HepG2 (cell line): ENCODE measurements at regions of chr2 and their contacts with region 1.

Region 1: DNA sequence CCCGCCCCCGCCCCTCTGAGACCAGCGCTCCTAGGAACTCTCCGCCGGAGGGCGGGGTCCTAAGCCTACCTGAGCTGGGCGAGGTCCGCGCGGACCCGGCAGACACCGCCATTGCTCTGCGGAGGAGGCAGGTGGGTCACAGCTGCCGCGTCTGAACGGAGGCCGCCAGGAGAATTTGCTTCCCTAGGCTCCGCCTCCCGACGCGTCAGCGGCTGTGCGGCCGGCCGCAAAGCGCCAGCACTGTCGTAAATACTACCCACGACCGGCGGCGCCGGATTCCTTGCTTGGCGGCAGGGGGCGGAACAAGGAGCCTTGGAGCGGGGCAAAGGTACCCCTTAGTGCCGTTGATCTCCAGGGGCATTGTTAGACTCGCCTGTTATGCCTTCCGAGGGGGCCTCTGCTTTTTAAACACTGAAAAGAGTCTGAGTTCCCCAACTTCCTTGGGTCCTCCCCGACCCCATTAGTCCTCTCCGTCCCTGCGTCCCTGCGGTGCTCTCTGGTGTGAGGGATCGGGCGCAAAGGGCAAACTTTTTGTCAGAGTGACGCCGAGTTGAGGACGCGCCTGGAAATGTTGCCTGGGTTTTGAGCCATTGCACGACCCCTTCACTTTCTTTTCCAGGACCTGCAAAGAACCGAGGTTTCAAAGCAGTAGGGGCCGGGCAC is at the start of gene GGCX:
- DNase-seq: peak; percentile 95
- ATAC-seq: peak; percentile 89
- H3K4me3 ChIP-seq: peak within 1 kb of the TSS; percentile 84 to 98 (median 91)
- H3K27ac ChIP-seq: peak within 1 kb of the TSS; percentile 91
- H3K4me1 ChIP-seq: peaks cover 59% of the 10 kb centered on the region
- H3K27me3 ChIP-seq: peaks cover 0 to 4% of the 10 kb centered on the region in 2 experiments; a peak in 1 of 5 replicates
- CTCF ChIP-seq: peak; percentile 48
- EP300 ChIP-seq: peak; percentile 35 to 56; a peak in 3 of 4 replicates
- POLR2A ChIP-seq: peak; percentile 98
- RAD21 ChIP-seq: peak; percentile 70
- total RNA-seq, gene GGCX: 51.3 and 103 TPM in 2 replicates

Region 2: DNA sequence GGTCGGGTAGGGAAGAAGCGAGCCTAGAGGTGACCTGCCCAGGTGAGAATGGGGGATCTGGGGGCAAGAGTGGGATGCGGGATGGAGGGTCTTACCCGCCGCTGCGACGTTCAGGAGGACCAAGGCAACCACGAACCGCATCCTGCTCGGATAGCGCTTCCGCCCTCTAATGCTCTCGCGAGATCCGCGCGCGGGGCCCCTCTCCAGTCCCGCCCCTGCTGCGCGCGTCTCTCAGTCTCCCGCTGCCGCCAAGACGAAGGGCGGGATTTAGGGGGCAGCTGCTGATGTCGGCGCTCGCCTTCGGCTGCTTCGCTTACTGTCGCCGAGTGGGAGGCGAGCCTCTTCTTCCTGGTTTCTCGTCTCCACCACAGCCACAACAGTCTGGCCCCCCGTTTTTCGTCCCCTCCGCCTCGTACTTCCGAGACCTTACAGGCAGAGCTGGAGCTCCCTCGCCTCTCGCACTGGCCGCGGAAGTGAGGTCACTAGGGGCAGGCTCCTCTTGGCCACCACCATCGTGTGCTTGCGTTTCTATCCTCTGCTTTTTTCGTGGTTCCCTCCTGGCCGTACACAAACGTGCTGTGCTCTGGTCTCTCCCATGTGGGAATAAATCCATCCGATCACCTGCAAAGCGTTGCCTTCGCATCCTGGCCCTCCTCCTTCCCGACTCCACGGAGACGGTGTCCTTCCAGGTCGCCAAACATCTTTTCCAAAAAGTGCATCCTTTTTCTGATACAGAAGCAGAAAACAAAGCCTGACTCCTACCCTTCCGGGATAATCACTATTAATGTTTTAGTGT is 233.4 kb before region 1 on chr2 and contains the start of gene TGOLN2:
- CTCF ChIA-PET with region 1: no interaction called
- POLR2A ChIA-PET with region 1: interaction called, 23 read pairs
- in situ Hi-C with region 1: no loop called
- intact Hi-C with region 1: no loop called
- DNase-seq: peak; percentile 89
- ATAC-seq: peak; percentile 84
- H3K4me3 ChIP-seq: peak within 1 kb of the TSS; percentile 80 to 90 (median 89)
- H3K27ac ChIP-seq: peak within 1 kb of the TSS; percentile 95
- H3K4me1 ChIP-seq: peaks cover 42% of the 10 kb centered on the region
- H3K27me3 ChIP-seq: no peaks in the 10 kb centered on the region; a peak in 1 of 5 replicates
- CTCF ChIP-seq: peak; percentile 47
- EP300 ChIP-seq: peak; percentile 35 to 43; a peak in 3 of 4 replicates
- POLR2A ChIP-seq: peak; percentile 99
- RAD21 ChIP-seq: peak; percentile 72
- total RNA-seq, gene TGOLN2: 62.5 and 99.6 TPM in 2 replicates

Region 3: GRCh38 chr2:85369500-85369899 is 191.9 kb before region 1 on chr2:
- CTCF ChIA-PET with region 1: no interaction called
- POLR2A ChIA-PET with region 1: interaction called, 10 read pairs
- in situ Hi-C with region 1: no loop called
- intact Hi-C with region 1: no loop called
- DNase-seq: no peak
- ATAC-seq: no peak
- H3K4me3 ChIP-seq: no peak overlapping the region
- H3K27ac ChIP-seq: no peak overlapping the region
- H3K4me1 ChIP-seq: peaks cover 48% of the 10 kb centered on the region
- H3K27me3 ChIP-seq: no peaks in the 10 kb centered on the region
- CTCF ChIP-seq: no peak
- EP300 ChIP-seq: no peak
- POLR2A ChIP-seq: no peak
- RAD21 ChIP-seq: no peak

Region 4: GRCh38 chr2:85439025-85439477 is 122.4 kb before region 1 on chr2:
- CTCF ChIA-PET with region 1: no interaction called
- POLR2A ChIA-PET with region 1: no interaction called
- in situ Hi-C with region 1: no loop called
- intact Hi-C with region 1: no loop called
- DNase-seq: peak; percentile 42
- ATAC-seq: peak; percentile 2; the same call in 2 of the 3 replicates
- H3K4me3 ChIP-seq: no peak overlapping the region
- H3K27ac ChIP-seq: no peak overlapping the region
- H3K4me1 ChIP-seq: peaks cover 26% of the 10 kb centered on the region
- H3K27me3 ChIP-seq: peaks cover 4 to 61% of the 10 kb centered on the region in 2 experiments
- CTCF ChIP-seq: no peak
- EP300 ChIP-seq: no peak
- POLR2A ChIP-seq: no peak
- RAD21 ChIP-seq: no peak

Region 5: DNA sequence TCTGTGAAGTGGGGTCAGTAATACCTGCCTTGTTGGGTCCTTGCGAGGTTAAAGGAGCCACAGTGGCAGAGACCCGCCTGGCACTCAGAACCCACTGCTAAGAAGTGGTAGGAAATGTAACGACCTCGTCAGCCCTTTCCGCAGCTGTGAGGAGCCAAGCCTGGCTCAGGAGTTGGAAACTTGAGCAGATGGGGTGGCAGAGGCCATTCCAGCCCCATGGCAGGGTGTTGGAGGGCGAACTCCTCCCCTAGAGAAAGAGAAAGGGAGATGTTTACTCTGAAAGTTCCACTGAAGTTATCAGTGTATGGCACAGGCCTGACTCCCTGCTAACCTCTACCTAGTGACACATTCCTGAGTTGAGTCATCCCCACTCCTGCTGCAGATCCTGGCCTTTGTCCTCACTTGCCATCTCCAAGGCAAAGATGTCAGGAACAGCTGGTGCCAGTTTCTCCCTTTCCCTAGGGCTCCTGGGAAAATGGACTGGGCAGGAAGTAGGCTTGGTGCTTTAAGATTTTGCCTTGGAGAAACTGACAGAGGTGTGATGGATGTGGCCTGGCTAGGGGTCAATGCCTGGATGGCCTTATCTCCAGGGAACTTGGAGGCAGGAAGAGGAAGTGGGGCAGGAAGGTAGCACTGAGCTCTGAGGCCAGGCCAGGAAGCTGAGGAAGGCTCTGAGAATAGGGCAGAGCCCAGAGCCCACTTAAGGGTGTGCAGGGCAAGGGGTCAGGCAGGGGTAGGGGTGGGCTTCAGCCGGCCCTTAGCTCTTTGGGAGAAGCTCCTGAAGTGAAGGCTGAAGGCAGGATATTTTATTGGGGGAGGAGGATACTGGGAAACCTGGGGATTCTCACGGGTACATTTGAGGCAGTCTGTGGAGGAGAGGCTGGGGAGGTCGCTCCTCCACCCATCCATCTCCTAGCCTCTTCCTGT is 23.7 kb after region 1 on chr2:
- CTCF ChIA-PET with region 1: no interaction called
- POLR2A ChIA-PET with region 1: interaction called, 645 read pairs
- in situ Hi-C with region 1: no loop called
- intact Hi-C with region 1: loop called (anchors 2 kb)
- DNase-seq: peak; percentile 96
- ATAC-seq: peak; percentile 88
- H3K4me3 ChIP-seq: peak overlapping the region; percentile 64 to 83 (median 65)
- H3K27ac ChIP-seq: peak overlapping the region; percentile 99
- H3K4me1 ChIP-seq: peaks cover 80% of the 10 kb centered on the region
- H3K27me3 ChIP-seq: no peaks in the 10 kb centered on the region
- CTCF ChIP-seq: no peak
- EP300 ChIP-seq: peak in 1 of 2 experiments; percentile 82; a peak in 2 of 4 replicates
- POLR2A ChIP-seq: peak; percentile 59 to 70; a peak in 3 of 4 replicates
- RAD21 ChIP-seq: no peak

Region 6: GRCh38 chr2:85602476-85603234 is 41.2 kb after region 1 on chr2 and contains the start of gene TMEM150A:
- CTCF ChIA-PET with region 1: no interaction called
- POLR2A ChIA-PET with region 1: interaction called, 645 read pairs
- in situ Hi-C with region 1: no loop called
- intact Hi-C with region 1: loop called (anchors 1 kb)
- DNase-seq: peak; percentile 87
- ATAC-seq: peak; percentile 90
- H3K4me3 ChIP-seq: peak within 1 kb of the TSS; percentile 84 to 98 (median 91)
- H3K27ac ChIP-seq: peak within 1 kb of the TSS; percentile 80
- H3K4me1 ChIP-seq: peaks cover 85% of the 10 kb centered on the region
- H3K27me3 ChIP-seq: no peaks in the 10 kb centered on the region; a peak in 1 of 5 replicates
- CTCF ChIP-seq: peak; percentile 46
- EP300 ChIP-seq: peak in 1 of 2 experiments; percentile 34; a peak in 1 of 4 replicates
- POLR2A ChIP-seq: peak in 1 of 2 experiments; percentile 66; a peak in 2 of 4 replicates
- RAD21 ChIP-seq: peak; percentile 89
- total RNA-seq, gene TMEM150A: 24.0 and 30.1 TPM in 2 replicates

Region 7: GRCh38 chr2:85628658-85629057 is 67.2 kb after region 1 on chr2:
- CTCF ChIA-PET with region 1: no interaction called
- POLR2A ChIA-PET with region 1: no interaction called
- in situ Hi-C with region 1: no loop called
- intact Hi-C with region 1: no loop called
- DNase-seq: no peak
- ATAC-seq: no peak
- H3K4me3 ChIP-seq: no peak overlapping the region
- H3K27ac ChIP-seq: no peak overlapping the region
- H3K4me1 ChIP-seq: no peaks in the 10 kb centered on the region
- H3K27me3 ChIP-seq: no peaks in the 10 kb centered on the region
- CTCF ChIP-seq: no peak
- EP300 ChIP-seq: no peak
- POLR2A ChIP-seq: no peak
- RAD21 ChIP-seq: no peak

Region 8: DNA sequence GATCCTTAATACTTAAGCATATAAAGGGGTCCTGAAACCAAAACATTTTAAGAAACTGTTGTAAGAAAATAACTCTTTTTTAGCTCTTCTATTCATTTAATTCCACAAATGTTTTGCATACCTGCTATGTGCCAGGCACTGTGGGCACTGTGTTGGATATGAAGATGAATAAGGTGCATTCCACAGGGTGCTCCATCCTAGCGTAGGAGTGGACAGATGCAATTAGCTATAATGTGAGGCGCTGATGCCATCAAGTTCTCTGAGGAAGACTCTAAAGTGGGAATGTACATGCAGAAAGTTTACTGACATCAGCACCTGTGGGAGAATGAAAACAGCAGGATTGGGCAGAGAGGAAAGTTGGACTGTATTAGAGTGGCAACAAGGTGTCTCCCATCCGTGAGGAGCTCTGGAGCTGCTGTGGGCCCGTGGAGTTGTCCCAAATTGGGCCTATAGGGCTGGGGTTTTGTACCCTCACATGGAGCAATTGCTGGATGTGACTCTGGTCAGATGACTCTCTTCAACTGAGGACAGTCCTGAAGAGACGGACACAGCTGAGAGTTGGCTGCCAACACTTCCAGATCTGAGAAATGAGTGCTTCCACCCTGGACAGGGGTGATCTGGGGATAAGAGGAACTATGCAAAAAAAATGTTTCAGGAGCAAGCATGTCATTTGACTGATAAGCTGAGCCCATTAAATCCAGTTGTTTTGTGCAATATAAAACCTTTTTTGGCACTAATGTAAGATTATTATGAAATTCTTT is 1206.9 kb after region 1 on chr2:
- CTCF ChIA-PET with region 1: no interaction called
- POLR2A ChIA-PET with region 1: no interaction called
- in situ Hi-C with region 1: no loop called
- intact Hi-C with region 1: no loop called
- DNase-seq: no peak
- ATAC-seq: no peak
- H3K4me3 ChIP-seq: no peak overlapping the region
- H3K27ac ChIP-seq: no peak overlapping the region
- H3K4me1 ChIP-seq: peaks cover 10% of the 10 kb centered on the region
- H3K27me3 ChIP-seq: no peaks in the 10 kb centered on the region
- CTCF ChIP-seq: no peak
- EP300 ChIP-seq: no peak
- POLR2A ChIP-seq: no peak
- RAD21 ChIP-seq: no peak